HCT116 (cell line): ENCODE measurements at regions of chr2 and their contacts with region 1.

Region 1: DNA sequence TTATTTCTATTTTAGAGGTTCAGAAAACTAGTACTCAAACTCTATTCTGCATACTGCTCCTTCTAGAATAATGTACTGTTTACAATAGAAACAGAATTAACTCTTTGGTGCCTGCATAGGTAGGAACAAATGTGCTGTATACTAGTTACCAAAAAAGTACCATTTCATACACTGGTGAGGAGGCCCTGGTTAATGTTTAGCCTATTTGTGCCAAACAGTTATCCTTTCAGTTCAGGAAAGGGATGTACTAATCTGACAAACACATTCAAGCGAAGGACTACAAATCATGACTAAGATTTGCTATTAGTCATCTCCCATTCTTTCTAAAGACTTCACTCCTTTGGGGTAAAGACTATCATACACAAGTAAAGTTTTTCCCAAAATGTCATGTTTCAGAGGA is 47.4 kb downstream of the EXOC6B start:
- DNase-seq: no peak
- ATAC-seq: no peak
- H3K4me3 ChIP-seq: no peak overlapping the region
- H3K27ac ChIP-seq: no peak overlapping the region
- H3K4me1 ChIP-seq: peaks cover 0 to 4% of the 10 kb centered on the region in 2 experiments; a peak in 1 of 4 replicates
- H3K27me3 ChIP-seq: no peaks in the 10 kb centered on the region
- CTCF ChIP-seq: no peak
- POLR2A ChIP-seq: no peak
- RAD21 ChIP-seq: no peak

Region 2: DNA sequence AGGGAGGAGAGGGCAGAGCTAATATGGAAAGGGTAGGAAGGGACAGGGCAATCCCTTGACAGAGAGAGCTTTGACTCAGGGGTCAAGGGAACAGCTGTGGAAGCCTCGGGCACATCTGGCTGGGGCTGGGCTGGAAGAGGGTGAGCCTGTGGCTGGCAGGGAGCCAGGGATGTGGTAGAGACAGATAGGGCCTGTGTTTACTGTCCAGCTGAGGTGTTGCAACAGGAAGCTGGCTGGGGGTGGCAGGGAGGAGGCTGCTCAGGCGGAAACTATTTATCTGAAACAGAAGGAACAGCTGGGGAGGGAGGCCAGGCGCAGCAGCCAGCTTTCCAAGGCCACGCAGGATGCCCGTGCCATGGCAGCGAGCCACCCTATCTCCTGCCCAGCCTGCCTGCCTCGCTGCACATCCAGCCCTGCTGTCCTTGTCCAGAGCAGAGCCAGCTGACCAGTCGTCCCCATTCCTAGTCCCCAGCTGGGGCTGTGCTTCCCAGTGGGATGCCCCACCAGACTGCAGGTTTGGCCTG is 895.4 kb before region 1 on chr2:
- CTCF ChIA-PET with region 1: no interaction called
- POLR2A ChIA-PET with region 1: no interaction called
- RAD21 ChIA-PET with region 1: no interaction called
- intact Hi-C with region 1: no loop called
- DNase-seq: peak; percentile 21
- ATAC-seq: peak; percentile 59
- H3K4me3 ChIP-seq: no peak overlapping the region; a peak in 1 of 4 replicates
- H3K27ac ChIP-seq: peak overlapping the region; percentile 40; the same call in 1 of the 2 replicates
- H3K4me1 ChIP-seq: peaks cover 39 to 58% of the 10 kb centered on the region in 2 experiments
- H3K27me3 ChIP-seq: no peaks in the 10 kb centered on the region
- CTCF ChIP-seq: no peak
- POLR2A ChIP-seq: no peak
- RAD21 ChIP-seq: no peak

Region 3: GRCh38 chr2:72824224-72824843 is 45.9 kb after region 1 on chr2:
- CTCF ChIA-PET with region 1: no interaction called
- POLR2A ChIA-PET with region 1: no interaction called
- RAD21 ChIA-PET with region 1: no interaction called
- intact Hi-C with region 1: loop called (anchors 5 kb)
- DNase-seq: peak; percentile 47
- ATAC-seq: no peak; the same call in 1 of the 2 replicates
- H3K4me3 ChIP-seq: peak overlapping the region; percentile 59 to 84
- H3K27ac ChIP-seq: no peak overlapping the region
- H3K4me1 ChIP-seq: peaks cover 4 to 26% of the 10 kb centered on the region in 2 experiments
- H3K27me3 ChIP-seq: no peaks in the 10 kb centered on the region
- CTCF ChIP-seq: no peak
- POLR2A ChIP-seq: no peak
- RAD21 ChIP-seq: no peak

Region 4: GRCh38 chr2:72973566-72974435 is 195.4 kb after region 1 on chr2:
- CTCF ChIA-PET with region 1: no interaction called
- POLR2A ChIA-PET with region 1: no interaction called
- RAD21 ChIA-PET with region 1: no interaction called
- intact Hi-C with region 1: no loop called
- DNase-seq: peak; percentile 36
- ATAC-seq: peak; percentile 98
- H3K4me3 ChIP-seq: no peak overlapping the region
- H3K27ac ChIP-seq: no peak overlapping the region
- H3K4me1 ChIP-seq: no peaks in the 10 kb centered on the region
- H3K27me3 ChIP-seq: no peaks in the 10 kb centered on the region
- CTCF ChIP-seq: peak; percentile 70 to 96 (median 83); a peak in 5 of 6 replicates
- POLR2A ChIP-seq: no peak
- RAD21 ChIP-seq: peak; percentile 72